Activated CD4-positive, alpha-beta T cell treated with anti-CD3 and anti-CD28 coated beads for 36 hours (primary cell): ENCODE measurements at regions of chr9 and their contacts with region 1.

Region 1: DNA sequence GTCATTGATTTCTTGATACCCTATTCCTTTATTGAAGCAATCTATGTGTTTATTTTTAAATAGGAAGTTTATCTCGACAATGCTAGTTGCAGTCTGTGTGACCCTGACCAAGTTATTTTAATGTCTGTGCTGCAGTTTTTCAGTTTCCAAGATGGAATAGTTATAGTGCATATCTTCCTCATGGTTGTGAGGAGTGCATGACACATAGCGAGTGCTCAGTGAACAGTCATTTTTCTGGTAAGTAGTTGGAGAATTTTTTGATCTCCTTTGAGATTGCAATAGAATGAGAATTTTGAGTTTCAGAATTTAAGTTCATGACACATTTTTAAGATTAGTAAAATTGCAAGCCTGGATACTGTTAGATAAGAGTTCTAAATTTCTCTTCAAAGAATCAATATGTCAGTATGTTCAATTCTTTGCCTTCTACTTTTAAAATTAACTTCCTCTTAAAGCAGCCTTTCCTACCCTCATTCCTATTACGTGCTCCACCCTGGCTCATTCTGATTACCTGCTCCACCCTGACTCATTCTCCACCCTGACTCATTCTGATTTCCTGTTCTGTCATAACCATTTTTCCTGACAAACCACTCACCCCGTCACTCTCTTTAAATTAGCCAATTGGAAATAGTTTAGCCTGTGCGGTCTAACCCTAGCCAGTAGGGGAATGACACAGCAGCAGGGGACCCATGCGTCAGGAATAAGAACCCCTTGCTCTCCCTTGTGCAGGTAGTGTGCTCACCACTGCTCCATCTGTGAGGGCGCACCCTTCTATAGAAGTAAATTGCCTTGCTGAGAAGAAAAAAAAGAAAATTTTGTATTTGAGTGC is 30.7 kb downstream of the SPIN1 start:
- DNase-seq: peak; percentile 68
- ATAC-seq: peak; percentile 95
- H3K4me3 Mint-ChIP-seq: no peak overlapping the region
- H3K27ac Mint-ChIP-seq: peak overlapping the region; percentile 86
- H3K4me1 Mint-ChIP-seq: peaks cover 17% of the 10 kb centered on the region
- H3K27me3 Mint-ChIP-seq: no peaks in the 10 kb centered on the region

Region 2: GRCh38 chr9:88303721-88304451 is 115.0 kb before region 1 on chr9:
- CTCF ChIA-PET with region 1: no interaction called
- POLR2A ChIA-PET with region 1: no interaction called
- intact Hi-C with region 1: loop called in 1 of 2 experiments (anchors 1 kb)
- DNase-seq: peak; percentile 81
- ATAC-seq: peak; percentile 91
- H3K4me3 Mint-ChIP-seq: no peak overlapping the region
- H3K27ac Mint-ChIP-seq: peak overlapping the region; percentile 68
- H3K4me1 Mint-ChIP-seq: peaks cover 27% of the 10 kb centered on the region
- H3K27me3 Mint-ChIP-seq: peaks cover 18% of the 10 kb centered on the region

Region 3: DNA sequence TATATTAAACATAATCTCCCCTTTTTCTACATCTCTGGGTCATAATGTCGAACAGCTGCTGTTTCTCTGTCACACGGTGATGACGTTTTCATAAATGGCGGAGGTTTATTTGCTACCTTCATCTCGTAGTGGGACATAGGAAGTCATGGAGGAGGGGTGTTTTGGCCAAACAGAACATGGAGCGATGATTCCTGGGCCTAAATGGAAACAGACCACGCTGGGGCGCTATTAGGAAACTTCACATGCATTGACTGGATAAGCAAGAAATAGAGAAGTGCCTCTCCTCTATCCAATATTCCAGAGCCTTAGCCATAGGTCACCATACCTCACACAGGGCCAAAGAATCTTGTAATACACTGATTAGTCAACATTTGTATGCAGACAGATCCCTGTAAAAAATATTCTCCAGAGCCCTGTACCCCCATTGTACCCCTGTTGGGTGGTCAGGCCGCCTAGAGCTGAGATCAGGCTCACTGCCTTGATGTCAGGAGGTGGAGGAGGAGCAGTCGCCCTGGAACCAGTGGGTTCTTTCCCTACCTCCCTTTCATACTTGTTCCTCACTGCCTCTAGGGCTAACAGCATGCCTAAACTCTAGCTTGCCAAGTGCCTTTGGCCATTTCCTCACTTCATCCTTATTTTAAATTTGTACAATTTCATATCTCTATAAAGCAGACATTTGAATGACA is 108.5 kb before region 1 on chr9:
- CTCF ChIA-PET with region 1: no interaction called
- POLR2A ChIA-PET with region 1: no interaction called
- intact Hi-C with region 1: loop called in 1 of 2 experiments (anchors 1 kb)
- DNase-seq: no peak
- ATAC-seq: no peak
- H3K4me3 Mint-ChIP-seq: no peak overlapping the region
- H3K27ac Mint-ChIP-seq: peak overlapping the region; percentile 25
- H3K4me1 Mint-ChIP-seq: peaks cover 31% of the 10 kb centered on the region
- H3K27me3 Mint-ChIP-seq: peaks cover 6% of the 10 kb centered on the region